ENCODE measurements at regions of chr11 and their contacts with region 1.

Region 1: DNA sequence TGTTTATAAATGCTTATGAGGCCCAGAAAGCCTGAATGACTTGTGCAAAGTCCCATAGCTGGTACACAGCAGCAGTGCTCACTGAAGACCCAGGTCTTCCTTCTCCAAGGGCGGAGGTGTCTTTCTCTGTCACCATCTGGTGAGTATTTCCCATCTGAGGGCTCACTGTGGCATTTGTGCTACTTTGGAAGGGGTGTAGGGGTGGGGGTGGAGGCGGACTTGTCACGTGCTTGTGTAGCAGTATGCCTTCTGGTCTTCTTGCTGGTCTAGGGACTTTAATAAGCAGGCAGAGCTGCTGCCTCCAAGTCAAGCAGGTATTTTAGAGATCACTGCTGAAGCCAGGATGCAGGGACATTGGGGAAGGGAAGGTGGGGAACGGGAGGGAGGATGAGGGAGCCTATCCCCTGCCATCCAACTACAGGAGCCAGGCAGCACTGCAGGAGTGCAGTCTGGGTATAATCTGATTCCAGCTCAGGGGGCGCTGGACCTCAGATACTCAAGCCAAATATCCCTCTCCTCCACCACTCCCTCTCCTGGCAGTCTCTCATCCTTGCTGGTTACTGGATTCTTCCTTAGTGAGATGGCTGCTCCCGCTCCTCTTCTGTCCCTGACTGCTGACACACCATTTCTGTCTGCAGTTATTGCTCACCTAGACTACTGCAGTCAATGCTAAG is 3.4 kb downstream of the ABCC8 start:
- DNase-seq: peak; percentile 50 to 73
- H3K4me3 ChIP-seq: no peak overlapping the region
- H3K27ac ChIP-seq: no peak overlapping the region
- H3K4me1 ChIP-seq: peaks cover 0 to 10% (median 6%) of the 10 kb centered on the region in 4 experiments; a peak in 5 of 7 replicates
- H3K27me3 ChIP-seq: peaks cover 32 to 47% (median 47%) of the 10 kb centered on the region in 4 experiments
- CTCF ChIP-seq: peak; percentile 84 to 100 (median 99)
- EP300 ChIP-seq: no peak
- POLR2A ChIP-seq: no peak
- RAD21 ChIP-seq: peak; percentile 64 to 77

Region 2: GRCh38 chr11:17394743-17395390 is 78.3 kb before region 1 on chr11:
- CTCF ChIA-PET with region 1: interaction called, 74 read pairs
- POLR2A ChIA-PET with region 1: interaction called, 4 read pairs
- DNase-seq: no peak
- H3K4me3 ChIP-seq: no peak overlapping the region
- H3K27ac ChIP-seq: no peak overlapping the region
- H3K4me1 ChIP-seq: peaks cover 0 to 3% (median under 1%) of the 10 kb centered on the region in 4 experiments; a peak in 3 of 7 replicates
- H3K27me3 ChIP-seq: peaks cover 0 to 6% (median 0%) of the 10 kb centered on the region in 4 experiments; a peak in 4 of 7 replicates
- CTCF ChIP-seq: peak; percentile 18 to 54 (median 48); a peak in 3 of 4 replicates
- EP300 ChIP-seq: no peak
- POLR2A ChIP-seq: no peak
- RAD21 ChIP-seq: peak; percentile 20 to 39; a peak in 2 of 4 replicates

Region 3: GRCh38 chr11:17412488-17413180 is 60.6 kb before region 1 on chr11:
- CTCF ChIA-PET with region 1: interaction called, 16 read pairs
- POLR2A ChIA-PET with region 1: no interaction called
- DNase-seq: no peak
- H3K4me3 ChIP-seq: no peak overlapping the region
- H3K27ac ChIP-seq: no peak overlapping the region
- H3K4me1 ChIP-seq: peaks cover 0 to 4% (median 3%) of the 10 kb centered on the region in 4 experiments; a peak in 3 of 7 replicates
- H3K27me3 ChIP-seq: no peaks in the 10 kb centered on the region; a peak in 3 of 7 replicates
- CTCF ChIP-seq: no peak; a peak in 1 of 4 replicates
- EP300 ChIP-seq: no peak
- POLR2A ChIP-seq: no peak
- RAD21 ChIP-seq: peak; percentile 29 to 40

Region 4: DNA sequence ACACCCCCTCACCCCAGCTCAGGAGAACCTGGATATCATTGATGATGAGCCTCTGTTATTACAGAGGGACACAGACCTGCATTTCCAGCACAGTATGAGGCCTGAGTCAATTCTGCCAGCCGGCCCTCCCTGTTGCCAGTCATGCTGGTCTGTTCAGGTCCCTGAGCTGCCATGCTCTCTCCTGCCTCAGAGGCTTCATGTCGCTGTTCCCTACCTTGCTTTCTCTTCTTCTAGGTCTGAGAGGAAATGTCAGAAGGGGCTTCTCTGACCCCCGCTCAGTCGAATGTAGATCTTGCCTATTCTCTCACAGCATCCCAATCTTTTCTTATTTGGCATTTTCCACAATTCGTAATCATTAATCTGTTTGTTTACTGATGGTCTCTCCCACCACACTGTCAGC is 25.3 kb after region 1 on chr11:
- CTCF ChIA-PET with region 1: interaction called, 26 read pairs
- POLR2A ChIA-PET with region 1: interaction called, 4 read pairs
- DNase-seq: peak in 1 of 2 experiments; percentile 52
- H3K4me3 ChIP-seq: no peak overlapping the region
- H3K27ac ChIP-seq: no peak overlapping the region
- H3K4me1 ChIP-seq: peaks cover 0 to 6% (median 2%) of the 10 kb centered on the region in 4 experiments; a peak in 3 of 7 replicates
- H3K27me3 ChIP-seq: no peaks in the 10 kb centered on the region; a peak in 2 of 7 replicates
- CTCF ChIP-seq: peak; percentile 48 to 61 (median 57); a peak in 3 of 4 replicates
- EP300 ChIP-seq: no peak
- POLR2A ChIP-seq: no peak
- RAD21 ChIP-seq: peak in 1 of 2 experiments; percentile 23; a peak in 1 of 4 replicates